ENCODE measurements at regions of chr2 and their contacts with region 1.

Region 1: DNA sequence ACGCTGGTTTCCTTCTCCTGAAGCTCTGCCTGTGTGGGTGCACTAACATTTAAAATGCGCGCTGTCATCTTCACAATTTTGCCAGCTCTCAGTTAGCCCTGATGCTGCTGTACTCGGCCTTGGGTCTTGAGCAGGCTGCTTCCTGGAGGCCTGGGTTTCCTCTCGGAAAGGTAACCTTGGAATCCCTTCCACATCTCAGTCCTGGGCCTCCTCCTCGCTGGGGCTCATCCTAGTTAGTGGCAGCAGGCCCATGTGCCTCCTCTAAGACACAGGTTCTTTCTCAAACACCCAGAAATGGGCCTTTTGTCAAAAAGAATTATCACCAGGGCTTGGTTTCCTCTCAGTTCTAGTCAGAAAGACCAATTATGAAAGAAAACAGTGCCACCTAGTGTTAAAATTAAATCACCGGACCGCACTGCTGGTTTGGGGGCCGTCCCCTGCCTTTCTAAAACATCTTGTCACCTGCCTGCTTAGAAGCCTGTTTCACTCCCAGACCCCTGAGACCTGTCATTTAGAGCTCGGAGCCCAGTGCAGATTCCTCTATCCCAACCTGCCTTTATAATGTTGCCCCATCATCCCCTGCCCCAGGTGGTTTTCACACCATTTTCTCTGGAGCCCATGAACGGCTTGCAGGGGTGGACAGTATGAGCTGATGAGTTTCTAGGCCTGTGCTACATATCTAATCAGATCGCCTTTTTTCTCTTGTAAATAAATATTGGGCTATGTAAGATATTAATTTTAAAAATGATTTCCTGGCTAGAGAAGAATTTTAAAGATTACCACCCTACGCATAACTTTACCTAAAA is 42.4 kb downstream of the HK2 start:
- DNase-seq: peak; percentile 45
- H3K4me3 ChIP-seq: no peak overlapping the region
- H3K27ac ChIP-seq: no peak overlapping the region
- H3K4me1 ChIP-seq: no peaks in the 10 kb centered on the region
- H3K27me3 ChIP-seq: no peaks in the 10 kb centered on the region
- CTCF ChIP-seq: peak; percentile 41 to 81 (median 69)
- POLR2A ChIP-seq: no peak

Region 2: DNA sequence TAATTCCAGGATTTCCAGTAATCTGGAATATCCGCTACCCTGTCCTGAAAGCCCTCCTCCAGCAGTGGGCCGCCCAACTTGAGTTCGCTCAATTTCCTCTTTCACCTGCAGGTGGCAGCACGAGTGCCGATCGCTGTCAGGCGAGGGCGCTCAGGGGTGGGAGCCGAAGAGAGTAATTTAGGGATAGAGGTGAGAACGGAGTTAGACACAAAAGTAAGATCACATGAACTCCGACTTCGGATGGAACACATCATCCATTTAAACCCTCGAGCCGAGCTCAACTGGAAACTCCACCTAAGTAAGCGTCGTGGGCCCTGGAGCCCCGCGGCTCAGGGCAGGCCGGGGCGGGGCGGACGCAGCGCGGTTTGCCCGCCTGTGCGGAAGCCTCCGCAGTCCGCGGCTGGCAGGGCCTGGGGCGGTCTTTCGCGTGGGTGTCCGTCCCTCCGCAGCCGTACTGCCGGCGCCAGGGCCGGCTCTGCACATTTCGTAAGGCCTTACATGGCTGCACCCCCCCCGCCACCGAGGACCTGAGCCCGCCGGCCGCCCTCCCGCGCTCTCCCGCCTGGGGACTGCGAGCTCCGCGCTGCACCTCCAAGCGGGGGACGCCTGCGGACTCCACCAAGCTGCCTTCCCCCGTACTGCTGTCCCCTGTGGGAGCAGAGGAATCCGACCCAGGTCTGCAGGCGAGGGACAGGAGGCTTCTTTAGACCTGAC is 161.0 kb before region 1 on chr2:
- intact Hi-C with region 1: loop called (anchors 1 kb)
- DNase-seq: peak; percentile 69
- H3K4me3 ChIP-seq: peak overlapping the region; percentile 29 to 38
- H3K27ac ChIP-seq: peak overlapping the region in 1 of 2 donors; percentile 29
- H3K4me1 ChIP-seq: no peaks in the 10 kb centered on the region
- H3K27me3 ChIP-seq: no peaks in the 10 kb centered on the region
- CTCF ChIP-seq: peak; percentile 73 to 88 (median 85)
- POLR2A ChIP-seq: peak; percentile 25

Region 3: GRCh38 chr2:75035444-75036353 is 159.4 kb after region 1 on chr2:
- intact Hi-C with region 1: no loop called
- DNase-seq: no peak
- H3K4me3 ChIP-seq: no peak overlapping the region
- H3K27ac ChIP-seq: no peak overlapping the region
- H3K4me1 ChIP-seq: no peaks in the 10 kb centered on the region
- H3K27me3 ChIP-seq: no peaks in the 10 kb centered on the region
- CTCF ChIP-seq: no peak
- POLR2A ChIP-seq: no peak